Activated CD4-positive, alpha-beta T cell treated with anti-CD3 and anti-CD28 coated beads, Interleukin-2, amount 10 ng/mL, durations not matched to agents 7 days and 5 days (primary cell): ENCODE measurements at regions of chr13 and their contacts with region 1.

Region 1: DNA sequence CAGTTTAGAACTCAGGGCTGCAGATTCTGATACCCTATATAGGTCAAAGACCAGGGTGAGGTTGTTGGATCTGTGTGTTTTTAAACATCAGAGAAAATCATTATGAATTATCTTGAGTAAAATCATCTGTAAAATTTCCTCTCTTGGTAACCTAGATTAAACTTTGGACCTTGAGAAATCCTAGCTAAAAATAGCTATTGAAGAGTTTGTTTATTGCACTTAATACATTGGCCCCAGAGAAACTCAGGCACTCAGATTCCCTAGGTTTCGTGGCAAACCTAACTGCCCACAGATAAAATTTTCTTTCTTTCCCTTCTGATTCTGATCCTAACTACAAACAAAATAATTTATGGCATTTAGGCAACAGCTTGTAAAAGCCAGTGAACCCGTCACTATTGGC is 102.3 kb downstream of the GPC6 start:
- DNase-seq: no peak
- H3K4me3 Mint-ChIP-seq: no peak overlapping the region
- H3K27ac Mint-ChIP-seq: no peak overlapping the region
- H3K4me1 Mint-ChIP-seq: no peaks in the 10 kb centered on the region
- H3K27me3 Mint-ChIP-seq: no peaks in the 10 kb centered on the region

Region 2: GRCh38 chr13:93146584-93147297 is 182.2 kb before region 1 on chr13:
- CTCF ChIA-PET with region 1: no interaction called
- POLR2A ChIA-PET with region 1: no interaction called
- DNase-seq: no peak
- H3K4me3 Mint-ChIP-seq: no peak overlapping the region
- H3K27ac Mint-ChIP-seq: no peak overlapping the region
- H3K4me1 Mint-ChIP-seq: no peaks in the 10 kb centered on the region
- H3K27me3 Mint-ChIP-seq: no peaks in the 10 kb centered on the region

Region 3: GRCh38 chr13:93228643-93228937 is 100.4 kb before region 1 on chr13:
- CTCF ChIA-PET with region 1: no interaction called
- POLR2A ChIA-PET with region 1: interaction called, 15 read pairs
- DNase-seq: no peak
- H3K4me3 Mint-ChIP-seq: no peak overlapping the region
- H3K27ac Mint-ChIP-seq: no peak overlapping the region
- H3K4me1 Mint-ChIP-seq: no peaks in the 10 kb centered on the region
- H3K27me3 Mint-ChIP-seq: peaks cover 42% of the 10 kb centered on the region

Region 4: DNA sequence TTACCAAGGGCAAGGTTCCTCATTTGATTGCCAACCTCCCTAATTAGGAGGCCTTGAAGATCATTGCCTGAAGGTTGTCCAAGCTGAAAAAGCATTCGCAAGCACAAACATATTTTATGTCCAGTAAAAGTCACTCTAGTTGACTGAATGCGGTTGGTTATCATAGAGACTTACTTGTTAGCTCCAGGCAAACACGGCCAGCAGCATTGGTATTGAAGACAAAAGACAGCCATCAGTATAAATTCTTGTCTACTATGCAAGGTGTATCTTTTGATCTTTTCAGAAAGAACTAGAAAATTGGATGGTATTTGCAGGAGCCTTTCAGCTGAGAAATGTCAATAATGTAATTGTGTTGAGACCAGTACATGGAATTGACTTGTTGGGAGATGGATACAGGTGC is 27.5 kb after region 1 on chr13:
- CTCF ChIA-PET with region 1: no interaction called
- POLR2A ChIA-PET with region 1: no interaction called
- DNase-seq: no peak
- H3K4me3 Mint-ChIP-seq: no peak overlapping the region
- H3K27ac Mint-ChIP-seq: no peak overlapping the region
- H3K4me1 Mint-ChIP-seq: no peaks in the 10 kb centered on the region
- H3K27me3 Mint-ChIP-seq: no peaks in the 10 kb centered on the region